ENCODE measurements at regions of chr11 and their contacts with region 1.

Region 1: GRCh38 chr11:65418711-65419459 is 3.7 kb upstream of the NEAT1 start:
- DNase-seq: peak; percentile 89
- CTCF ChIP-seq: no peak

Region 2: GRCh38 chr11:65454696-65455456 is 36.0 kb after region 1 on chr11:
- in situ Hi-C with region 1: loop called (anchors 10 kb)
- DNase-seq: peak; percentile 98
- CTCF ChIP-seq: peak; percentile 32

Region 3: GRCh38 chr11:65487413-65488272 is 68.8 kb after region 1 on chr11:
- in situ Hi-C with region 1: loop called (anchors 10 kb)
- DNase-seq: peak; percentile 79
- CTCF ChIP-seq: peak; percentile 12

Region 4: DNA sequence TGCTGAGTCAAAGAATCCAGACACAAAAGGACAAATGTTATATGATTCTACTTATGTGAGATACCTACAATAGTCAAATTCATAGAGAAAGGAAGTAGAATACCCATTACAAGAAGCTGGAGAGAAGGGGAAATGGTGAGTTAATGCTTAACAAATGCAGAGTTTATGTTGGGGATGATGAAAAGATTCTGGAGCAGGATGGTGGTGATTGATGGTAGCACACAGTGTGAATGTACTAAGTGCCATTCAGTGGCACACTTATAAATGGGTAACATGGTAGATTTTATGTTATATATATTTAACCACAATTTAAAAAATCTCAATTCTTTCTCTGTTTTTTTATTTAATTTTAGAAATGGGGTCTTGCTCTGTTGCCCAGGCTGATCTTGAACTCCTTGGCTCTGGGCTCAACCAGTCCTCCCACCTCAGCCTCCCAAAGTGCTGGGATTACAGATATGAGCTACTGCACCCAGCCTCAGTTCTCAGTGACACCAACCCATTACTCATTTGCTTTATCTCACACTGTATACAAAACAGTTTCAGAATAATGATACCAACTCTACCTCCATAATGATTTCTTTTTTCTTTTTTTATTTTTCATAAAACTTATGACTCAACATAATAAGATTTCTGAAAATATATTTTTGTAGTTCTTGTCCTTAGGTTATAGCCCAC is 253.4 kb after region 1 on chr11:
- in situ Hi-C with region 1: no loop called
- DNase-seq: no peak
- CTCF ChIP-seq: no peak